AG04450 (cell line): ENCODE measurements at regions of chr1 and their contacts with region 1.

Region 1: DNA sequence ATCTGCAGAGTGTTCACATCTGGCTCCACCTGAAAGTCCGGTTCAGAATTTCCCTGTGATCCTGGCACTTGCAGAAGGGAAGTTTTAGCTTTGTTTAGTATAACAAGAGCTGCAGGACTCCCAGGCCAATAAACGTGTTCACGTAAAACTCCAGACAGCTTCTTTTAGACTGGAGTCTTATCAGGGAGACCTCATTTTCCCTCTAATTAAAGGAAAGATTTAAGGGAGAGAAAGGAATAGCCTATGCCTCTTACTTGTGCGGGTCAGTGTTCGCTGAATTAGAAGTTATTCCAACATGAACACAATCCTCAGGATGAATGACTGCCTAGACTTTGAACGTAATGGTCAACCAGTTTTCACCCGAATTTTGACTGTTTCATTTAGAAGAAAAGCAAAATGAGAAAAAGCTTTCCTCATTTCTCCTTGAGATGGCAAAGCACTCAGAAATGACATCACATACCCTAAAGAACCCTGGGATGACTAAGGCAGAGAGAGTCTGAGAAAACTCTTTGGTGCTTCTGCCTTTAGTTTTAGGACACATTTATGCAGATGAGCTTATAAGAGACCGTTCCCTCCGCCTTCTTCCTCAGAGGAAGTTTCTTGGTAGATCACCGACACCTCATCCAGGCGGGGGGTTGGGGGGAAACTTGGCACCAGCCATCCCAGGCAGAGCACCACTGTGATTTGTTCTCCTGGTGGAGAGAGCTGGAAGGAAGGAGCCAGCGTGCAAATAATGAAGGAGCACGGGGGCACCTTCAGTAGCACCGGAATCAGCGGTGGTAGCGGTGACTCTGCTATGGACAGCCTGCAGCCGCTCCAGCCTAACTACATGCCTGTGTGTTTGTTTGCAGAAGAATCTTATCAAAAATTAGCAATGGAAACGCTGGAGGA is 202.1 kb upstream of the SGIP1 start:
- DNase-seq: peak; percentile 61
- H3K4me3 ChIP-seq: peak overlapping the region; percentile 72
- H3K27ac ChIP-seq: peak overlapping the region; percentile 90
- H3K27me3 ChIP-seq: no peaks in the 10 kb centered on the region
- CTCF ChIP-seq: peak; percentile 52

Region 2: GRCh38 chr1:66143651-66144050 is 188.3 kb before region 1 on chr1:
- CTCF ChIA-PET with region 1: no interaction called
- POLR2A ChIA-PET with region 1: no interaction called
- DNase-seq: no peak
- H3K4me3 ChIP-seq: no peak overlapping the region
- H3K27ac ChIP-seq: no peak overlapping the region
- H3K27me3 ChIP-seq: no peaks in the 10 kb centered on the region
- CTCF ChIP-seq: no peak

Region 3: GRCh38 chr1:66271216-66271903 is 60.5 kb before region 1 on chr1:
- CTCF ChIA-PET with region 1: interaction called, 8 read pairs
- POLR2A ChIA-PET with region 1: interaction called, 19 read pairs
- DNase-seq: peak; percentile 97
- H3K4me3 ChIP-seq: peak overlapping the region; percentile 35
- H3K27ac ChIP-seq: peak overlapping the region; percentile 97
- H3K27me3 ChIP-seq: no peaks in the 10 kb centered on the region
- CTCF ChIP-seq: no peak